Posterior cingulate gyrus (tissue), 11 donors: ENCODE measurements at regions of chr2 and their contacts with region 1.

Region 1: DNA sequence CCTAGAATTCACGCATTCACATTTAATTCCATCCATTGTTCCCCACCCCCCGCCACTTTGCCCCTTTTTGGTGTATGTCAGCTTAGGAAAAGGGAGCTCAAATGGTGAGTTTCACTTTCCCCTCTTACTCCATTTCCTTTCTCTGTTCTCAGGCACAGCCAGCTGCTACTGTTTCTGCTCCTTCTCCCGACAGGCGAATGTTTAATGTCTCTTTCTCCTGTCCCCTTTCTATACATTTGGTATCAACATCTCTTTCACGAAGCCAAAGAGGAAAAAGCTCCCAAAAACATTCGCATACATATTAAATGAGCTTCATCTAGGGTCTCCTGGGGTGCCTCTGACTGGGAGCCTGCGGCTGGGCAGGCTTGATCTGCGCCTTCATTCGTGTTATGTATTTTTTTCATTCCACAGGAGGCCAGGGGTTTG is 124.2 kb upstream of the SATB2 start:
- DNase-seq: no peak

Region 2: DNA sequence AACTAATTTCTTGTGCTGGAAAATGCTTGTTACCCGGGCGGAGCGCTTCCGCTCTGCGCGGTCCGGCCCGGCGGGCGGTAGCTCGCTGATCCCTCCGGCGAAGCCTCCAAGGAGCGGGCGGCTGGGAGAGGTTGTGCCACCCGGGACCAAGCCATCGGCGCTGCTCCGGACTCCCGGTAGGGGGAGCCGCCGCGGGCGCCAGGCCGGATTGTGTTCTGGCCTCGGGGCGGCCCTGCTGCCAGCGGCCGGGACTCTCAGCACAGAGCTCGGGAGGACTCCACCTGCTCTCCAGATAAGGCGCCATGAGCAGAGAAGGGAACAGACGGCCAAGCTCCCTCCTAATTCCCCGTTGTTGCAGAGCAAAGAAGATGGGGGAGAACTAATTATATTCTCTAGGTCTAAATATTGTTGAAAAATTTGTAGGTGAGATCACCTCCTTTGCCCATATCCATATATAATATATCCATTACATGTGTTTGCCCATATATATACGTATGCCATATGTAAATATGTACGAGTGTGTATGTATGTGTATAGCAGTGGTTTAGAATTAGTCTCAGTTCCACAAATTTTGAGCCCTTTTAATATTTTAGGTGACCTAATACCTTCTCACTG is 110.4 kb before region 1 on chr2:
- intact Hi-C with region 1: loop called (anchors 10 kb)
- DNase-seq: peak in 9 of 10 donors; percentile 60 to 97 (median 75)